OCI-LY7 (cell line): ENCODE measurements at regions of chr14 and their contacts with region 1.

Region 1: GRCh38 chr14:105527661-105528581 is 1.5 kb downstream of the TMEM121 start:
- DNase-seq: peak; percentile 84
- H3K4me3 ChIP-seq: peak overlapping the region; percentile 64
- H3K27ac ChIP-seq: no peak overlapping the region
- H3K4me1 ChIP-seq: peaks cover 46% of the 10 kb centered on the region
- CTCF ChIP-seq: peak; percentile 76

Region 2: DNA sequence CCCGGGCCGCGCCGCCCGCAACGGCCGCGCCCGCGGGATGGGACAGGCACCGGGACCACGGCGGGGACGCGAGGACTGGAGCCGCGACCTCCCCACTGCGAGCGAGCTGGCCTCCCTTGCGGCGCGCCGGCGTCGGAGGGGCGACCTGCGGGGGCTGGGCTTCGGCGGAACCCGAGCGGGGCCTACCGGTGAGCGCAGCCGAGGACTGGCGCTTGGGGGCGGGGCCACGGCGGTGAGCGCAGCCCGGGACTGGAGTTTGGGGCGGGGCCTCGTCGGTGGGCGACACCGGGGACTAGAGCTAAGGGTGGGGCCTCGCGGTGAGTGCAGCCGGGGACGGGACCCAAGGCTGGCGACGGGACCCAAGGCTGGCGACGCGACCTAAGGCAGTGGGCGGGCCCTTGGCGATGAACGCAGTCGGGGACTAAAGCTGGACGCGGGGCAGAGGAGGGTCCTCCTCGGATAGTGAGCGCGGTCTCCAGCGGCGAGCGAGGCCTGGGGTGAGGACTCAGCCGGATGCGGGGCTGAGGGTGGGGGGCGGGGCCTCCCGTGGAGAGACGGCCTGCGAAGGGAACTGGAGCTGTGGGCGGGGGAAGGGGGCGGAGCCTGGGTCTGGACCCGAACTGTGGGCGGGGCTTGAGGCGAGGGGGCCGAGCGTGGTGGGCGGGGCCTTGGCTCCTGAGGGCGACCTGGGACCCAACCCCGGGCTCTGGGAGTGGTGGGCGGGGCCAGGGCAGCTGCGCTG is 227.0 kb before region 1 on chr14 and contains the start of gene BRF1:
- CTCF ChIA-PET with region 1: no interaction called
- POLR2A ChIA-PET with region 1: no interaction called
- intact Hi-C with region 1: no loop called
- DNase-seq: peak; percentile 97
- H3K4me3 ChIP-seq: peak within 1 kb of the TSS; percentile 70
- H3K27ac ChIP-seq: peak within 1 kb of the TSS; percentile 73
- H3K4me1 ChIP-seq: peaks cover 14% of the 10 kb centered on the region
- CTCF ChIP-seq: no peak
- total RNA-seq, gene BRF1: 23.7 and 25.5 TPM in 2 replicates

Region 3: GRCh38 chr14:105480952-105481801 is 46.7 kb before region 1 on chr14:
- CTCF ChIA-PET with region 1: no interaction called
- POLR2A ChIA-PET with region 1: interaction called, 3 read pairs
- intact Hi-C with region 1: loop called (anchors 1 kb)
- DNase-seq: peak; percentile 83
- H3K4me3 ChIP-seq: peak overlapping the region; percentile 19
- H3K27ac ChIP-seq: no peak overlapping the region
- H3K4me1 ChIP-seq: peaks cover 15% of the 10 kb centered on the region
- CTCF ChIP-seq: peak; percentile 97